PC-3 (cell line): ENCODE measurements at regions of chr2 and their contacts with region 1.

Region 1: DNA sequence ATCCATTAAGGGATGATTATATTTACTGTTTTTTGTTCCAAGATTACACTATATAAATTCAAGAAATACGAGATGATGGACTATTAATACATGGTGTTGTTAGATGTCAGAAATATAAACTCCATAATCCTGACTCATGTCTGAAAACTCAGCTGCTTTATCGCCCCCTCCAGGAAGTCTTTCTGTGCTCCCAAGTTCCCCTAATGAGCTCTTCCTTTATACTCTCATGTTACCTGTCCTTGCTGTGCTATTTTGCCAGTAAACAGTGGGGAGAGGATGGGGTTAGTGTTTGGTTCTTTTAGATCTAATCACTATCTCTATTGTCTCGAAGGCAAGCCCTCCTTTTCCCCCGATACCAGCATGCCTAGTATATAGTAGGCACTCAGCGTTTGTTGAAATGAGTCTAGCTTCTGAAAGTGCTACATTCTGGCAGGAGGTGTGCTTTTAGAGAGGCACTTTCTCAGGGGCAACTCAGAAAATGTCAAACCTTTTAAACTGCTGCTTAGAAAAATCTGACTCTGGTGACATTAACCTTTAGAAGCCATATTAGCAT is 21.4 kb upstream of the BARD1 start:
- DNase-seq: peak; percentile 52
- ATAC-seq: peak; percentile 65
- H3K4me3 ChIP-seq: no peak overlapping the region
- H3K27ac ChIP-seq: no peak overlapping the region
- H3K4me1 ChIP-seq: no peaks in the 10 kb centered on the region
- H3K27me3 ChIP-seq: no peaks in the 10 kb centered on the region
- CTCF ChIP-seq: peak; percentile 65

Region 2: GRCh38 chr2:214679736-214680135 is 151.1 kb before region 1 on chr2:
- CTCF ChIA-PET with region 1: no interaction called
- POLR2A ChIA-PET with region 1: no interaction called
- intact Hi-C with region 1: loop called (anchors 5 kb)
- DNase-seq: no peak
- ATAC-seq: no peak
- H3K4me3 ChIP-seq: no peak overlapping the region
- H3K27ac ChIP-seq: no peak overlapping the region
- H3K4me1 ChIP-seq: peaks cover 39% of the 10 kb centered on the region
- H3K27me3 ChIP-seq: no peaks in the 10 kb centered on the region
- CTCF ChIP-seq: no peak

Region 3: DNA sequence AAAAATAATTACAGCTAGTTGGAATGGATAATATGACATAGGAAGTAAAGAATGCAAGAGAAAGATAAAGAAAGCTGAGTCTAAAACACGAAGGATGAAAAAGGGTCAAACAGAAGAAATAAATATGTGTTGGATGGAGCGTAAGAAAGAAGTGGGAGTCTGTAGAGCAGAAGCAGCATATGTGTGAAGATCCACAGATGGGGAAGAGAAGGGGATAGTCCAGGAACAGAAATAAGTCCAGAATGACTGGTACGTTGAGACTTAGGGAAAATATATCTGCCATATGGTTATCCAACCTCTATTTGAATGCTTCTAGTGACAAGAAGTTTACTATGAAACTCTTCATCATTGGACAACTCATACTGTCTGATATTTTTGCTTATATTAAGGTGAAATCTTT is 289.5 kb after region 1 on chr2:
- CTCF ChIA-PET with region 1: no interaction called
- POLR2A ChIA-PET with region 1: no interaction called
- intact Hi-C with region 1: no loop called
- DNase-seq: no peak
- ATAC-seq: no peak
- H3K4me3 ChIP-seq: no peak overlapping the region
- H3K27ac ChIP-seq: no peak overlapping the region
- H3K4me1 ChIP-seq: no peaks in the 10 kb centered on the region
- H3K27me3 ChIP-seq: no peaks in the 10 kb centered on the region
- CTCF ChIP-seq: no peak